Left cardiac atrium (tissue), 4 donors: ENCODE measurements at regions of chr17 and their contacts with region 1.

Region 1: DNA sequence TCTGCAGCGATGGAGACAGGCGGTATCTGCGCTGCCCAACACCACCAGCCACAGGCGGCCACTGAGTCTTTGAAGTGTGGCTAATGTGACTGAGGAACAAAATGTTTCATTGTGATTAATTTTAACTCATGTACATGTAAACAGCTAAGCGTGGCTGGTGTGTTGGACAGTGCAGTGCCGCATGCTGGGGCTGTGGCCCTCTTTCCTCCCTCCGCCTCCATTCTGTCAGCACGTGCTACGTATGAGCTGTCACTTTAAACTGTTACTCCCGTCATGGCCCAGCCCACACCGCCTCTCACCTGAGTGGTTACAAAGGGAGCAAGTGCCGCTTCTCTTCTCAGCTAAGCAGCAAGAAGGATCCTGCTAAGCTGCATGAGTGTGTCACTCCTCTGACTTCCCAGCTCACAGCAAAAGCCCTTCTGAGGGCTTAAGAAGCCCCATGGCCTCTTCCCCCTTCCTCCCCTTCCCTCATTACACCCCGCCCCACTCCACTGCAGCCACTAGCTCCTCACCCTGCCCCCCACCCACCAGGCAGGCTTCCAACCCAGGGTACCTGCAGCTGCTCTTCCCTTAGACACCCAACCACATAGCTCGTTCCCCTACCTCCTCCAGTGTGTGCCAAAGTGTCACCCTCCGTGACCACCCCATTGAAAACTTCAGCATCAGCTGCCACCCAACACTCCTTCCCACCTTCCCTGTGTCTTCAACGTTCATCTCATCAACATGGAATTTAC is 15.0 kb downstream of the HASPIN start:
- DNase-seq: no peak
- ATAC-seq: peak; percentile 27 to 56

Region 2: DNA sequence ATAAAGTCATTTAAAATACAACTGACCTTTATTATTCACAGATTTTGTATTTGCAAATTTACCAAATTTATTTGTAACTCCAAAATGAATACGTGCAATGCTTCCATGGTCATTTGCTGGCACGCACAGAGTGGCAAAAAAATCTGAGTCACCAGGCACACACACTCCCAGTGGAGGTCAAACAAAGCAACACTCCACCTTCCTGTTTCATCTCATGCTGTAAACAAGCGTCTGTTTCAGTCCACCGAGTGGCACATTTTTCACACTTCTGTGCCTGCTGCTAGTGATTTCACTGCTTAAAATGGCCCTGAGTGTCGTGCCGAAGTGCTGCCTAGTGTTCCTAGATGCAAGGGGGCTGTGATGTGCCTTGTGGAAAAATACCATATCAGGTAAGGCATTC is 80.1 kb after region 1 on chr17:
- intact Hi-C with region 1: loop called in 1 of 2 experiments (anchors 10 kb)
- DNase-seq: no peak
- ATAC-seq: peak; percentile 82 to 89

Region 3: DNA sequence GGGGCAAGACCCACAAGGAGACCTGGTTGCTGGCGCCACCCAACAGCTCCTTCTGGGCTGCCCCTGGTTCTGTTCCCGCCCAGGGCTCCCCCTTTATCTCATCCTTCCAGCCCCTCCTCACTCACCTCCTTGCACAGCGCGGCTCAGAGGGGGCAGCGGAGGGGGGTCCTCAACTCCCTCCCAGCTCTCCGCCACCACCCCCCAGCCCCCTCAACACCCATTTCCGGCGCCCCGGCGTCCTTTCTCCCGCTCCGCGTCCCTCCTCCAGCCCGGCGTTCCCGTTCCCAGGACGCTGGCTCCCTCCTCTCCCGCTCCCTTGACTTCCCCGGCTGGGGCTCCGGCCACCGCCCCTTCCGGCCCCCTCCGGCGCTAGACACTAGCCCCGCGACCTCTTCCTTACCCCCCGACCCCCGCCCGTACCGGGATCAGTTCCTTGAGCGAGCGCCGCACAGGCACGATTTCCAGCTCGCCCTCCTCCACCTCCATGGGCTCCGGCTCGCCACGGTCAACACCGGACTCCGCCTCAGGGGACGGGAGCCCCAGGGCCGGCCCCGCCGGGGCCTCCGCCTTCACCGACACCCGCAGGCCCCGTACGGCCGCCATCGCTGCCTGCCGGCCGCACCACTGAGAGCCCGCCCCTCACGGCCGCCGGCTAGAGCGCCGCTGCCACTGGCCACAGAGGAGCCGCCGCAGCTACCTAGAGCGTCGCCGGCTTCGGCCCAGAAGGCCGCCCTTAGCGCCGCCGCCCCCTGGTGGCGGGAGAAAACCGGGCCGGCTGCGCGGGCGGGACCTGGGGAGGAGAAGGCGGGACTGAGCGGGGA is 107.1 kb after region 1 on chr17 and contains the start of gene NCBP3:
- intact Hi-C with region 1: loop called in 1 of 2 experiments (anchors 10 kb)
- DNase-seq: peak; percentile 92
- ATAC-seq: peak; percentile 98 to 99
- total RNA-seq, gene NCBP3: 16.3 to 24.4 TPM

Region 4: GRCh38 chr17:4004517-4005295 is 266.0 kb after region 1 on chr17:
- intact Hi-C with region 1: loop called in 1 of 2 experiments (anchors 10 kb)
- DNase-seq: peak; percentile 63
- ATAC-seq: peak; percentile 40 to 54

Region 5: DNA sequence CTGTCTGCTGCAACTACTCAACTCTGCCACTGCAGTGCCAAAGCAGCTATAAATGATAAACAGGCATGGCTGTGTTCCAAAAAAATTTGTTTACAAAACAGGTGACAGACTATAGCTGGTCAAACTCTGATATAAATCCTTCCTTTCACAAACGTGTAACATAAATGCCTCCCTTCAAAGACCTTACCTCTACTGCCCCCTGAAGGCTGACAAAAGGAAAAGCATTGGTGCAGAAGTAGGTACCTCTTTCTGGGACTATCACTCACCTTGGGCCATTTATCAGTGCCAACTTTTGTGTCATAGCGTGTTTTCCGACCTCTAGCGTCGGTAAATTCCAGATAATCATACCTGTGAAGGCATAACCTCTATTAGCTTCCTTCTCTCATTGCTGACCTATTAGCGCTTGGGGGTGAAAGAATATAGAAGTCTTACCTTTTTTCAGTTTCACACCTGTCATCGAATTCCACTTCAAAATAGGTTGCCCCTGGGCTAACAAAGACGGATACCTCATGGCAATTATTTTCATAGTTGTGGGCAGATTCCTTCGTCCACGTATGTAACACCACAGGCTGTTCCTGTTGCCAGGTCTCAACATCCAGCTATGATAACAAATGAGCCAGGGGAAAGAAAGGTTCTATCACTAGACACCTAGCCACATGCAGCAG is 336.2 kb after region 1 on chr17:
- intact Hi-C with region 1: loop called (anchors 5 to 10 kb)
- DNase-seq: no peak
- ATAC-seq: peak; percentile 50 to 59